ENCODE measurements at regions of chr10 and their contacts with region 1.

Region 1: GRCh38 chr10:97072851-97073665 is 112.7 kb downstream of the SLIT1 start:
- DNase-seq: peak; percentile 84
- CTCF ChIP-seq: peak; percentile 96

Region 2: DNA sequence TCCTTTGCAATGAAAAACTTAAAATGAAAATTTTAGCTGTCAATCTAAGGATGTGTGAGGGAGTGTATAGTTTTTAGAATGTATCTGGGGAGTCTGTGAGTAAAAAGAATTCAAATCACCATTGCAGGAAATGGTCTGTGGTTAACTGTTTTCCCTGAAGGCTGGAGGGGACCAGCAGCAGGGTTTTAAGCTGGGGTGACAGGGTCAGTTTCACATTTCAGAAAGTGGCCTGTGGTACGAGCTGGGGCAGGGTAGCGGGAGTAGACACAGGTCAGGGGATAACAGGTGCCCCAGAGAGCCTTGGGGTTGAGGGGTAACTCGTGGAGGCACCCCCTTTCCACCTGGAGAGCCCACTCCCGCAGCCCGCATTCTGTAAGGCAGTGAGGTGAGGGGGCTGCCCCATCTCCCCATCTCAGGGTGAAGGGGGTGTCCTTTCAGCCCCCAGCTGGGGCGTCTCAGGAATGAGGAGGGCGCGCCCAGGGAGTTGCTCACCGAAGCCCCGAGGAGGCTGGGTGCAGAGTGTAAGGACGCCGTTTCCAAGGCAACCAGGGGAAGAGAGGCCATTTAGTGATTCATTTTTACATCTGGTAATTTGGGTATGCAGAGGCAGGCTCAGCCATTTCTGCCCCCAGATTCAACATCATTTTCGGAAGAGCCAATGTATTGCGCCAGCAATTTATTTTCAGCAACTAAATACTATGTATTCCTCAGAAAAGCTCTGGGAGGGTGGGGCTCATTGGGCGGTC is 56.2 kb before region 1 on chr10:
- CTCF ChIA-PET with region 1: no interaction called
- POLR2A ChIA-PET with region 1: no interaction called
- DNase-seq: peak; percentile 77
- CTCF ChIP-seq: no peak

Region 3: DNA sequence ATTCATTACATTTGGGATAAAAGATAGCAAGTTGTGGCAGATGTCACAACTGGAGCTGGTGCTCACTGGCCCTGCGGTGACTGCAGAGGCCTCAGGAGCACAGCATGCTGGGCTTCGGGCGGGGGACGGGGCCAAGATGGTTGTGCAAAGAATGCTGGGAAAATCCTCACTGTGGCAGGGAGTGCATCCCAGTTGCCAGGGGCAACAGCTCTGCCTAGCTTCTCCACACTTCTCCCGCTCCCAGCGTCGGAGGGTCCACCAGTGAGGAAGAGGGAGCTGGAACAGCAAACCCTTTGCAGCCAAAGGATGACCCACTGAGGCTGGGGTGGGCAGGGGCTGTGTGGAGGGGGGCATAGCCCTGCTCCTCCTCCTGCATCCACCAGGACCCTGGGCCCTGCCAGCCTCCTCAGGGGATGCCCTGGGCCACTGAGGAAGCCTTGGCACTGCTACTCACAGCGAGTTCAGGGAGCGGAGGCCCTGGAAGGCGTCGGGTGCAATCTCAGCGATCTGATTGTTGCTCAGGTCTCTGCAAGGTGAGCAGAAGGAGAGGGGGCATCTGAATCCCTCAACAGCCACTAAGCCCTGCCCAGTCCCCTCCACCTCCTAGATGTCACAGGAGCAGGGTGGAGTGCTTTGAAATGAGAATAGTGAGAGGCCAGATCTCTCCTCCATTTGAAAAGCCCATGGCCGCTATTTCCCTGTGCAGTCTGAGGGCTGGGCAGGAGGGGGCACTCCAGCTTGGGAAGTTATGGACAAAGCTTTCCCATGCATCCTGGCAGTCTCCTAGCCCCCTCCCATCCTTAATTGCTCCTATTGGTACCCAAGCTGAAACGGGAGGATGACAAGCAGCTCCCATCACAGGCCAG is 13.8 kb before region 1 on chr10:
- CTCF ChIA-PET with region 1: interaction called, 75 read pairs
- POLR2A ChIA-PET with region 1: no interaction called
- DNase-seq: no peak
- CTCF ChIP-seq: no peak

Region 4: GRCh38 chr10:97109547-97109946 is 36.5 kb after region 1 on chr10:
- CTCF ChIA-PET with region 1: interaction called, 33 read pairs
- POLR2A ChIA-PET with region 1: no interaction called
- DNase-seq: no peak
- CTCF ChIP-seq: no peak

Region 5: GRCh38 chr10:97123765-97124164 is 50.7 kb after region 1 on chr10:
- CTCF ChIA-PET with region 1: interaction called, 33 read pairs
- POLR2A ChIA-PET with region 1: no interaction called
- DNase-seq: no peak
- CTCF ChIP-seq: no peak

Region 6: DNA sequence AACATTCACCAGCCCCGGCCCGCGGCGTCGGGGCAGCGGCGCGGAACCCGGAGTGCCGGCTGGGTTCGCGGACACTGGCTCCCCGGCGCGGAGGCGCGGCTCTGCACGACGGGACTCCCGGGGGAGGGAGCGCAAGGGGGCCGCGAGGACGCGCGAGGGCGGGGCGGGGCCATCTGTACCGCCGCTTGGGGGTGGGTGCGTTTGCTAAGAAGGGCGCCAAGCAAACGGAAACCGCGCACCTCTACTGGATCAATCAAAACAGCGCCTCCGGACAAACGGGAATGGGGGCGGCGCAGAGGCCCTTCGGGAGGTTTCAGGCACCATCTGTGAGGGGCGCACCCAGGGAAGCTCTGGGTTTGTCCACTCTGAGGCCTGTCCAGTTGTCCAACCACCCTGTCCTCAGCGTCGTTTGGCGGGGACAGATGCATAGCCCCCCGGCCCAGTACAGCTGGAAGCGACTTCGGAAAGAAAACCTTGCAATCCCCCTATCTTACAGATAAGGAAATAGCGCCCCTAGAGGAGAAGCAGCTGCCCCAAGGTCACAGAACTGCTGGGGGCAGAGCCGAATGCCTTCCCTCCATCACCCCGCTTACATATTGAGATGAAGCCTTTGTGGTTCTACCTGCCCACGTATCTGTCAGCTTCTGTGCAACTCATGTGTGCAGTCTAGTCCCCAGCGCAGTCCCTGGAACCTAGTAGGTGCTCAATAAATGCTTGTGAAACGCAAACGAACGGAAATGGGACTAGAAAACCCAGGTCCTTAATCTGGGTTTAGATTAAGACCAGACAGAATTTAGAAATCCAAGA is 123.4 kb after region 1 on chr10:
- CTCF ChIA-PET with region 1: interaction called, 484 read pairs
- POLR2A ChIA-PET with region 1: no interaction called
- DNase-seq: peak; percentile 79
- CTCF ChIP-seq: peak; percentile 79

Region 7: GRCh38 chr10:97234400-97234799 is 161.3 kb after region 1 on chr10:
- CTCF ChIA-PET with region 1: interaction called, 33 read pairs
- POLR2A ChIA-PET with region 1: interaction called, 5 read pairs
- DNase-seq: no peak
- CTCF ChIP-seq: peak; percentile 11